Psoas muscle (tissue), 8 donors: ENCODE measurements at regions of chr5 and their contacts with region 1.

Region 1: DNA sequence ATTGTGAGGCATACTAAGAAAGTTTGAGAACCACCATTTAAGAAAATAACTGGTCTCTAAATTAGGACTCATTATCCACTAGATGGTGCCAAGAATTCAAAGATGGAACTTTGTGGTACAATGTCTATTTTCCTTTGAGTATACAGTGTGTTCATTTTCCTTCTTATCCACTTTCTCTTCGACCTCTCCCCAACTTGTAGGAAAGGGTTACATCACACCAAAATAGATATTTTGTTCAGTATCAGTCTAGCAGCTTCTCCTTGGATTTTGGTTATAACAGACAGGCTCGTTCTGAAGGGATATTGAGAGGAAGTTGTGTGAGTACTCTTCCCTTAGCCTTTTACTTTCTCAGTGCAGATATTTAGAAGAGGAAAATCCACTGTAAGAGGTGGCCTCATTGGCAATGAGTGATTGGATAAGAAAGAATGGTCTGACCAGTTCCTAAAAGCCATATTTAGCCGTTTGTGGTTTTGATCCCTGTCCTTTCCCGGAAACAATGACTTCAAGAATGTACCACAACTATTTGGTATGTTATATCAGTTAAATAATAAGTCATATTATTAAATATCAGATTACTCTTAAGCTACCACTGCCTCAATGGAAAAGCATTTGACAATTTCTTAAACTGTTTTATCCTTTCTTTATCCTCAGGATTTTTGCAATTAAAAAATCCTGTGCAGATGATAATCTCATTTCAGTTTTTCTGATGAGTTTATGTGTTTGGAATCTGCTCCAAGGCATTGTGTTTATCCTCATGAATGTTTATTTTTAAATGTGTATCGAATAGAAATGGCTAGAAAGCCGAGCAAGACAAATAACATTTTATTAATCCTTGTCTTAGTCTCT is 69.0 kb upstream of the GRAMD2B start:
- DNase-seq: no peak
- ATAC-seq: peak; percentile 59 to 89 (median 72)
- H3K4me3 ChIP-seq: no peak overlapping the region
- H3K27ac ChIP-seq: no peak overlapping the region
- H3K4me1 ChIP-seq: no peaks in the 10 kb centered on the region
- H3K27me3 ChIP-seq: no peaks in the 10 kb centered on the region
- CTCF ChIP-seq: peak; percentile 56

Region 2: DNA sequence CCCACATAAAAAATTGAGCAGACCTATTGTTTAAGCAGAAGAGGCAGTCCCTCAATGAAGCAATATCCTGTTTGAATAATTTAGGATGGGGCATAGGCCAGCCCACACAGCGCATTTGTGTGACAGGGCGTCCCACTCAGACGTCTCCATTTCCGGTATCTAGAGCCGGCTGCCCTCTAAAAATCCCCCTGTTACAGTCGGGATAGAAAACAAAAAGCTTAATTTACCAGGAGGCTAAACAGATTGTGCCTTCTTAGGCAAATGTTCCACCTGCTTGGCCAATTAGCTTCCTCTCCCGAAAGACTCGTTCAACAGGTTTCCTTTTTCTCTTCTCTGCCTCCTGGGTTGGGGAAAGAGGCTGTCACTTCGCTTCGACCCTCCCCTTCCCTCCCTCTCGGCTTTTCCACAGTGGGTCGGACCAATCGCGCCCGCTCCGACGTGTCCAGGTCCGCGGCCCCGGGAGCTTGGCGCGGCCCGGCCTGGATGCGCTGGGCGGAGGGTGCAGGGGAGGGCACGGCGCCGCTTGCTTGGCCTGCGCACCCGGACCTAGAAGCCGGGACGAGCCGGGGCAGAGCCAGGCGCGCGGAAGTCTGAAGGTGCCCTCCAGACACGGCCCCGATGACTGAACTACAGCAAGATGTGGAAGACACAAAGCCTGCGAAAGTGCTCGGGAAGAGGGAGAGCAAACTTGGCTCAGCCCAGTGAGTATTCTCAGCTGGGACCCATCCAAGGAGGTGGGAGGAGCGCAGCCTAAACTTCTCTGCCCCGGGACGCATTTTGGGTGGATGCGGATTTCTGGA is 69.0 kb after region 1 on chr5 and contains the start of gene GRAMD2B:
- intact Hi-C with region 1: loop called in 1 of 2 experiments (anchors 10 kb)
- DNase-seq: peak; percentile 82 to 85
- ATAC-seq: peak; percentile 85 to 96 (median 94)
- H3K4me3 ChIP-seq: peak within 1 kb of the TSS; percentile 72
- H3K27ac ChIP-seq: peak within 1 kb of the TSS; percentile 82
- H3K4me1 ChIP-seq: no peaks in the 10 kb centered on the region
- H3K27me3 ChIP-seq: no peaks in the 10 kb centered on the region
- CTCF ChIP-seq: no peak
- total RNA-seq, gene GRAMD2B: 2.8 to 8.0 (median 5.4) TPM

Region 3: DNA sequence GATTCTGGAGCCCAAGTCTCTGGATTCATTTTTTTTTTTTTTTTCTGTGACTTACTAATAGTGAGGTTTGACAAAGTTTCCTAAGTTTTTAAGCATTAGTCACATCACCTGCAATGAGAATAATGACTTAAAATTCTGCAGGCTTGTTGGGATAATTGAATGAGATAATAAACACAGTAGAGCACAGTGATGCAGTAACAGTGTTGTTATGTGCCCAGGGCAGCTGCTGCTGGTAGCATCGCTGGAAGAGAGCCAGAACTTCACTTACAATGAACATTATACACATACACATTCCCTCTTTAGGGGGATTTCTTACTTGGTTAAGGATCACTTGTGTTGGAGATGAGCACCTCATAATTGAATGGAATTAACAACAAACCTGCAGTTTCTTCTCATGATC is 161.9 kb after region 1 on chr5:
- intact Hi-C with region 1: no loop called
- DNase-seq: no peak
- ATAC-seq: no peak
- H3K4me3 ChIP-seq: no peak overlapping the region
- H3K27ac ChIP-seq: no peak overlapping the region
- H3K4me1 ChIP-seq: no peaks in the 10 kb centered on the region
- H3K27me3 ChIP-seq: no peaks in the 10 kb centered on the region
- CTCF ChIP-seq: no peak

Region 4: DNA sequence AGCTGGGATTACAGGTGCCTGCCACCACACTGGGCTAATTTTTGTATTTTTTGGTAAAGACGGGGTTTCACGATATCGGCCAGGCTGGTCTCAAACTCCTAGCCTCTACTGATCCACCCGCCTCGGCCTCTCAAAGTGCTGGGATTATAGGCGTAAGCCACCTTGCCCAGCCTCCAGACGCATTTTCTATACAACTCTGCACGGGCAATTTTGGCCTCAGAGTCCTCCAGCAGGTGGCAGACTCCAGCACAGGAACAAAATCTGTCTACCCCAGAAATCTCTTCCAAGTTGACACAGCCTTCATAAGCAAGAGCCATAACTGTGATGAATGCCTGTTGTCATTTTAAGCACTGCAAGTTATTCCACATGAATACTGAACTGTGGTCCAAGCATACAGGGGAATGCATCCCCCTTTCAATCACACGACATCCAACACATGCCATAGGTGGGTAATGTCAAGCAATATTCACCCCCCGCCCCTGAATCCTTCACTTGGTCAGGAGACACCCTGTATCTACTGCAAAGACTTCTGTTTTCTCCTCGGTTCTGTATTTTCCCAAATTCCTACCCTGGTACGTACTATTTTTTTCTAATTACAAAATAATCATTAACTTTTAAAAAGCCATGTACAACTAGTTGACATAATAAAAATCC is 190.0 kb after region 1 on chr5:
- intact Hi-C with region 1: loop called (anchors 1 kb)
- DNase-seq: no peak
- ATAC-seq: no peak
- H3K4me3 ChIP-seq: no peak overlapping the region
- H3K27ac ChIP-seq: no peak overlapping the region
- H3K4me1 ChIP-seq: no peaks in the 10 kb centered on the region
- H3K27me3 ChIP-seq: no peaks in the 10 kb centered on the region
- CTCF ChIP-seq: peak; percentile 16

Region 5: DNA sequence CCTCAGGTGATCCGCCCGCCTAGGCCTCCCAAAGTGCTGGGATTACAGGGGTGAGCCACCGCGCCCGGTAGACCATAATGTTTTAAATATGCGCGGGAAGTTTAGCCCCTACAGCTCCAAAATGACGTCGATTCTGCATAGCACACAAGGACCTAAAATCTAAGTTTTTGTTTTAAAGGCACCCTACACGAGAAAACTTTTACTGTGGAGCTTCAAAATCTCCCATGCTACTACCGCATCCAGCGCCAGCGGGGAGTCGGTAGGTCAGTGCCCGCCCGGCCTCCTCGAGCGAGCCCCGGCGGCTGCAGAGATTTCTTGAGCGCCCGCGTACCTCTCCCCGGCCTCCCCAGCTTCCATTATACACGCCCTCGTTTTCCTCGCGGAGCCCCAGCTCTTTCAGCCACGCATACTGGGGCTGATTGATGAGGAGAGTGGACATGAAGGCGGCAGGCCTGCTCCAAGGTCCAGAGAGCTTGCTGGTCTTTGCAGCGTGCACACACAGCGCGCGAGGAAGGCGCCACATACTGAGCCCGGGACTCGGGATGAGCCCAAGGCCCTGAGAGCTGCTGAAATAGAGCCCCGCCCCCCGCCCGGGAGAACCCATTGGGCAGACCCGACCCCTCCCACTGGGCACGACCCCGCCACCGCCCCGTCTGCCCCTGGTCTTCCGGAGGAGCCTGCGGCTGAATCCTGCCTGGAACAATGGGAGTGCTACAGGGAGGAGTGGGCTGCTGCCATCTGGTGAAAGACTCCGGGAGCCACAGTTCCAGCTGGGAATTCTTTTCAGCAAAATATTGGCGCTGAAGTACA is 240.6 kb after region 1 on chr5 and contains the start of gene ALDH7A1:
- intact Hi-C with region 1: loop called in 1 of 2 experiments (anchors 5 kb)
- DNase-seq: peak; percentile 92 to 93
- ATAC-seq: peak; percentile 80 to 95 (median 92)
- H3K4me3 ChIP-seq: peak within 1 kb of the TSS; percentile 81
- H3K27ac ChIP-seq: peak within 1 kb of the TSS; percentile 27
- H3K4me1 ChIP-seq: peaks cover 8% of the 10 kb centered on the region
- H3K27me3 ChIP-seq: no peaks in the 10 kb centered on the region
- CTCF ChIP-seq: peak; percentile 26
- total RNA-seq, gene ALDH7A1: 8.7 to 26.7 (median 12.3) TPM